Gastrocnemius medialis (tissue), 4 donors: ENCODE measurements at regions of chr7 and their contacts with region 1.

Region 1: GRCh38 chr7:81256991-81257390 is 338.1 kb upstream of the SEMA3C start:
- DNase-seq: no peak
- ATAC-seq: no peak
- H3K4me3 ChIP-seq: no peak overlapping the region
- H3K27ac ChIP-seq: no peak overlapping the region
- H3K4me1 ChIP-seq: no peaks in the 10 kb centered on the region
- H3K27me3 ChIP-seq: no peaks in the 10 kb centered on the region
- CTCF ChIP-seq: peak in 1 of 5 experiments; percentile 33
- POLR2A ChIP-seq: no peak

Region 2: GRCh38 chr7:80699045-80699638 is 557.8 kb before region 1 on chr7:
- in situ Hi-C with region 1: loop called in 3 of 4 experiments (anchors 25 kb)
- intact Hi-C with region 1: loop called (anchors 1 kb)
- DNase-seq: no peak
- ATAC-seq: peak; percentile 65 to 80
- H3K4me3 ChIP-seq: no peak overlapping the region
- H3K27ac ChIP-seq: no peak overlapping the region
- H3K4me1 ChIP-seq: no peaks in the 10 kb centered on the region
- H3K27me3 ChIP-seq: no peaks in the 10 kb centered on the region
- CTCF ChIP-seq: peak; percentile 64 to 74 (median 68)
- POLR2A ChIP-seq: no peak

Region 3: GRCh38 chr7:80722616-80723141 is 534.3 kb before region 1 on chr7:
- in situ Hi-C with region 1: loop called in 2 of 4 experiments (anchors 25 kb)
- intact Hi-C with region 1: no loop called
- DNase-seq: peak; percentile 59 to 77
- ATAC-seq: peak; percentile 87 to 91
- H3K4me3 ChIP-seq: no peak overlapping the region
- H3K27ac ChIP-seq: peak overlapping the region in 2 of 4 donors; percentile 45 to 54
- H3K4me1 ChIP-seq: peaks cover 0 to 4% of the 10 kb centered on the region in 2 donors
- H3K27me3 ChIP-seq: no peaks in the 10 kb centered on the region
- CTCF ChIP-seq: no peak
- POLR2A ChIP-seq: no peak

Region 4: GRCh38 chr7:81150951-81151361 is 106.0 kb before region 1 on chr7:
- in situ Hi-C with region 1: no loop called
- intact Hi-C with region 1: no loop called
- DNase-seq: peak in 1 of 2 donors; percentile 38
- ATAC-seq: peak; percentile 84 to 88
- H3K4me3 ChIP-seq: no peak overlapping the region
- H3K27ac ChIP-seq: peak overlapping the region in 3 of 4 donors; percentile 15 to 48 (median 34)
- H3K4me1 ChIP-seq: no peaks in the 10 kb centered on the region
- H3K27me3 ChIP-seq: no peaks in the 10 kb centered on the region
- CTCF ChIP-seq: no peak
- POLR2A ChIP-seq: no peak